ENCODE measurements at regions of chr5 and their contacts with region 1.

Region 1: DNA sequence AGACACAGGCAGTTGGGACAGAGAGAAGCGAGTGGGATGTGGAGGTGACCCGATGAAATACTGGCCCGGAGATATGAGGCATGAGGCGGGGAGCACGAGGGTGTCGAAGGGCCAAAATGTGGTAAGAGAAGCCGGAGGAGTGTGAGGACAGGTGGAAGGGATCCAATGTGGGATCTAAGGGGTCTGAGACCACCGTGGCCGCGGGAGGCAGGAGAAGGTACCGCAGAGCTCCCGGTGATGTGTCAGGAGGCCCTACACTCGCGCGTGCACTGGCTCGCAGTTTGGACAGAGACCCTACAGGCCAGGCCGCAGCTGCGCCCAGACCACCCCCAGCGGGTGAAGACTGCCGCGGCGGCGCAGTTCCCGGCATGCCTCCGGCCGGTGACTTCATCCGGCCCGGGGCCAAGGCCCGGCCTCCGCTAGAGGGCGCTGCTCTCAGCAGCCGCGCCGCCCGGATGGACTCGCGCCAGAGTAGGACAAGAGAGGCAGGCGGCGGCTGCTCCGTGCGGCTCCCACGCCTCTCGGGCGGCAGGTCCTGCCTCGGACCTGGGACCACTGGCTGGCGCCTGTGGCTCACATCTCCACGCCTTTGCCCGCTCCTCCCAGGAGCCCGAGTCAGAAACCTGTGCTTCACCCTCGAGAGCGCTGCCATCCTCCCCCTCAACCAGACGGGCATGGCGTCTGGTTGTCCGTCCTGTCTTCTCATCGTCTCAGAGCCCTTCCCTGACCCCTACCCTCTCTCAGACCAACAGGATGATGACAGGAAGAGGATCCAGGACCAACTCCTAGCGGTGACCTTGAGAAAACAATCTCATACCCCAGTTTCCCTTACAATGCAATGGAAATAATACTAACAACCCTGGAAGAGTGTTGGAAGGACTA is 35.4 kb upstream of the STING1 start:
- DNase-seq: peak; percentile 79
- H3K4me3 ChIP-seq: peak overlapping the region; percentile 63
- H3K27ac ChIP-seq: peak overlapping the region; percentile 2
- H3K27me3 ChIP-seq: no peaks in the 10 kb centered on the region
- CTCF ChIP-seq: peak; percentile 79

Region 2: GRCh38 chr5:138354926-138355378 is 1163.0 kb before region 1 on chr5:
- in situ Hi-C with region 1: no loop called
- DNase-seq: peak; percentile 80
- H3K4me3 ChIP-seq: peak overlapping the region; percentile 83
- H3K27ac ChIP-seq: no peak overlapping the region
- H3K27me3 ChIP-seq: no peaks in the 10 kb centered on the region
- CTCF ChIP-seq: no peak

Region 3: DNA sequence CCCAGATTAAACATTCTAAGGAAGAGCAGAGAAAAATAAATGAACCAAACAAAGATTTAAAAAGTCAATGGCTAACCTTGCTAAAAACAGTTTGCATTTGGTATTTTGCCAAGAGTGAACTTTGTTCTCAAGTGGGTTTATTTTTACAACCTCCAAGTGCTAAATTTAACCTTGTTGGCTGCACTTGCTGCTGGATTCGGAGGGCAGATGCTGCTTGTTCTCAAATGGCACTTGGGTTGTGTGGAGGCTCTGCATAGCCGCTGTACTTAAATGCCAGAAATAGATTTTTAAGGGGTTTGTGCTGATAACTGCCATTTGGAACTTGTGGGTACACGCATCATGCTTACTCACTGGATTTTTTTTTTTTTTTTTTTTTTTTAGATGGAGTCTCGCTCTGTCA is 100.7 kb before region 1 on chr5:
- in situ Hi-C with region 1: loop called (anchors 10 kb)
- DNase-seq: no peak
- H3K4me3 ChIP-seq: no peak overlapping the region
- H3K27ac ChIP-seq: no peak overlapping the region
- H3K27me3 ChIP-seq: no peaks in the 10 kb centered on the region
- CTCF ChIP-seq: no peak